ENCODE measurements at regions of chr3 and their contacts with region 1.

Region 1: DNA sequence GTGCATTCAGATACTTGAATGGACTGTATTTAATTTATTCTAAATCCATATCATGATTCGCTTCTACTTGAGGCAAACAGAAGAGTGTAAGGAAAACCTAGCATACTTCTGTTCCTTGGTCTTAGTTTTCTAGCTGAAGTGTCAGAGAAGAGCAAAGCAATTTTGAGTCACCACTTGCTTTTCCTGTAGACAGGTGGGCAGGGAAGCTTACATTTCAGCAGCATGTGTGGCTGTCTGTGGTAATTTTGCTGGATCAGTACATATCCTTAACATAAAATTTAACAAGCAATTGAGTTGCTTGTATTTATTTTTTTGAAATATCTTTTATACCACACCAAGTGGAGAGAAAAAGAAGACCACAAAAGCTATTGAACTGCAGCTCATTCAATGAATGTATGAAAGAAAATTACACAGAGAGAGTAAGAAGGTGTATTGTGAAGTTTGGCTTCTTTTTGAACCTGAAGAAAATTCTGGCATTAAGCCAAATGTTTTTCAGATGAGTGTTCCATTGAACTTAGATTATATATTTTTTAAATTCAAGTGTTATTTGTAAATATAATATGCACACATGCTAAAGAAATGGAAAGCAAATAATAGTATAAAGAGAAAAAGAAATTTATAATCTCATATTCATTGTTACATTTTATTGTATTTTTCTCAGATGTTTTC is 747.6 kb downstream of the NAALADL2 start:
- DNase-seq: peak; percentile 60
- ATAC-seq: peak; percentile 74
- H3K4me3 ChIP-seq: no peak overlapping the region
- H3K27ac ChIP-seq: no peak overlapping the region
- H3K4me1 ChIP-seq: peaks cover 11% of the 10 kb centered on the region
- H3K27me3 ChIP-seq: no peaks in the 10 kb centered on the region
- CTCF ChIP-seq: no peak

Region 2: GRCh38 chr3:174640932-174641331 is 965.9 kb before region 1 on chr3:
- CTCF ChIA-PET with region 1: no interaction called
- POLR2A ChIA-PET with region 1: no interaction called
- intact Hi-C with region 1: no loop called
- DNase-seq: no peak
- ATAC-seq: no peak
- H3K4me3 ChIP-seq: no peak overlapping the region
- H3K27ac ChIP-seq: no peak overlapping the region
- H3K4me1 ChIP-seq: no peaks in the 10 kb centered on the region
- H3K27me3 ChIP-seq: no peaks in the 10 kb centered on the region
- CTCF ChIP-seq: no peak

Region 3: DNA sequence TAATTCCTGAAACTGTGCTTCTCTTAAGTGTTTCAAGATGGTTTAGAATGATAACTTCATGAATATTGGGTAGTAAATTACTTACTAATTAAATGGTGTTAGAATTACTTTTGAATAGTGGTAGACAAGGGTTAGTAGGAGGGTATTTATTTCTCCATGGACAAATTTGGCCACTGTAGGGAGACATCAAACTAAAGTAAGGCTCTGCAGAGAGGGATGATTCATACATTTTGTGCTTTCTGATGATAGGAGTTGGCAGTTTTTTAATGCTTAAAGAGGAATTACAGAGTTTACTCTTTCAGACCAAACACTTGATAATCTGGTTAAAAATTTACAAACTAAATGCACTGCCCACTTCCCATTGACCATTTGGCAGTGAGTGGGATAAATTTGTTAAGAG is 620.1 kb before region 1 on chr3:
- CTCF ChIA-PET with region 1: no interaction called
- POLR2A ChIA-PET with region 1: no interaction called
- intact Hi-C with region 1: loop called (anchors 10 kb)
- DNase-seq: peak; percentile 23
- ATAC-seq: peak; percentile 54
- H3K4me3 ChIP-seq: no peak overlapping the region
- H3K27ac ChIP-seq: no peak overlapping the region
- H3K4me1 ChIP-seq: 0 out of 2 replicates have a peak, but pooled peaks cover 6% of the 10 kb centered on the region
- H3K27me3 ChIP-seq: no peaks in the 10 kb centered on the region
- CTCF ChIP-seq: no peak

Region 4: GRCh38 chr3:175073235-175073905 is 533.4 kb before region 1 on chr3:
- CTCF ChIA-PET with region 1: no interaction called
- POLR2A ChIA-PET with region 1: no interaction called
- intact Hi-C with region 1: loop called (anchors 10 kb)
- DNase-seq: no peak
- ATAC-seq: peak; percentile 21; the same call in 1 of the 2 replicates
- H3K4me3 ChIP-seq: no peak overlapping the region
- H3K27ac ChIP-seq: no peak overlapping the region
- H3K4me1 ChIP-seq: peaks cover 13% of the 10 kb centered on the region
- H3K27me3 ChIP-seq: no peaks in the 10 kb centered on the region
- CTCF ChIP-seq: no peak

Region 5: GRCh38 chr3:175267121-175267531 is 339.7 kb before region 1 on chr3:
- CTCF ChIA-PET with region 1: no interaction called
- POLR2A ChIA-PET with region 1: no interaction called
- intact Hi-C with region 1: loop called (anchors 10 kb)
- DNase-seq: peak; percentile 62
- ATAC-seq: peak; percentile 81
- H3K4me3 ChIP-seq: peak overlapping the region; percentile 14
- H3K27ac ChIP-seq: peak overlapping the region; percentile 94
- H3K4me1 ChIP-seq: peaks cover 27% of the 10 kb centered on the region
- H3K27me3 ChIP-seq: no peaks in the 10 kb centered on the region
- CTCF ChIP-seq: no peak

Region 6: GRCh38 chr3:175743733-175744400 is 137.1 kb after region 1 on chr3:
- CTCF ChIA-PET with region 1: no interaction called
- POLR2A ChIA-PET with region 1: no interaction called
- intact Hi-C with region 1: loop called (anchors 10 kb)
- DNase-seq: peak; percentile 92
- ATAC-seq: peak; percentile 93
- H3K4me3 ChIP-seq: no peak overlapping the region
- H3K27ac ChIP-seq: peak overlapping the region; percentile 68
- H3K4me1 ChIP-seq: peaks cover 55% of the 10 kb centered on the region
- H3K27me3 ChIP-seq: no peaks in the 10 kb centered on the region
- CTCF ChIP-seq: no peak